Activated naive CD4-positive, alpha-beta T cell treated with anti-CD3 and anti-CD28 coated beads for 36 hours (primary cell): ENCODE measurements at regions of chr19 and their contacts with region 1.

Region 1: GRCh38 chr19:51570962-51571575 is at the start of gene ZNF175:
- DNase-seq: peak; percentile 91
- H3K4me3 Mint-ChIP-seq: peak within 1 kb of the TSS; percentile 97
- H3K27ac Mint-ChIP-seq: peak within 1 kb of the TSS; percentile 91
- H3K4me1 Mint-ChIP-seq: peaks cover 23% of the 10 kb centered on the region
- H3K27me3 Mint-ChIP-seq: peaks cover 4% of the 10 kb centered on the region
- total RNA-seq, gene ZNF175: 6.5 to 7.9 TPM

Region 2: DNA sequence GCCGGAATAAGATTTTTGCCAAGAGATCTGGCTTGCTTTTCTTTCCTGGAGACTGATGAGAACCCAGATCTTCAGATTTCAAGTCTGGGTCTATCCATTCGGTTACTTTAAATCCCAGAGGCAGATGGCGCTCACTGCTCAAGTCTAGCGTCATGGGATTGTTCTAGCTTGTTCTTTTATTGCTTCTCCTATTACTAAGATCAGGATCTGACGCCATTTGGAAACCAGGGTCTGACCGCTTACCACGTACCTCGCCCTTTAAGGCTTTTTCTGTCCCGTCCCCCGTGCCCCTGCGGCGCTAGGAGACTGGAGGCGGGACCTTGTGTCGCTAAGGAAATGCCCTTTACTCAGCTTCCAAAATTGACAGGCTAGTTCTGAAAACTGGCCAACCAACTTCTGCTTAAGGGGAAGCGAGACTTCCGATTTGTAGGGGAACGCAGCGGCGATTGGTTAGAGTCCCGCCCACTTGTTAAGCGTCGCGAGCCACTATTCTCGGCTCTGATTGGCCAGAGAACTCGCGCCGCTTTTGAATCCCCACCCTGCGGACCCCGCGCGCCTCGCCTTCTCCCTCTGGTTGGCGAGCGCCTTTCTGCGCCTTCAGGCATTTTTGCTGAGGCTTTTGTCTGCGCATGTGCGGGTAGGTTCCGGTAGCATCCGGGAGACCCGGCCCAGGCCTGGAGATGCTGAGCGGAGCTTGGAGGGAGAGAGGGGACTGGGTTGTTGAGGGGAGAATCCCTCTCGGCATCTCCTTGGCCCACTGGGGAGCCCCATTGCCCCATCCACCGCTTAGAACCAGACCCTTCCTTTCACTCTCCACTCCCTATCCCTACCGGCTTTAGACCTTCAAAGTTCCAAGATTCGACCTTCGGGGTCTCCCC is 176.9 kb before region 1 on chr19:
- CTCF ChIA-PET with region 1: no interaction called
- intact Hi-C with region 1: no loop called
- DNase-seq: peak; percentile 98
- H3K4me3 Mint-ChIP-seq: peak overlapping the region; percentile 95
- H3K27ac Mint-ChIP-seq: peak overlapping the region; percentile 96
- H3K4me1 Mint-ChIP-seq: peaks cover 35% of the 10 kb centered on the region
- H3K27me3 Mint-ChIP-seq: no peaks in the 10 kb centered on the region

Region 3: DNA sequence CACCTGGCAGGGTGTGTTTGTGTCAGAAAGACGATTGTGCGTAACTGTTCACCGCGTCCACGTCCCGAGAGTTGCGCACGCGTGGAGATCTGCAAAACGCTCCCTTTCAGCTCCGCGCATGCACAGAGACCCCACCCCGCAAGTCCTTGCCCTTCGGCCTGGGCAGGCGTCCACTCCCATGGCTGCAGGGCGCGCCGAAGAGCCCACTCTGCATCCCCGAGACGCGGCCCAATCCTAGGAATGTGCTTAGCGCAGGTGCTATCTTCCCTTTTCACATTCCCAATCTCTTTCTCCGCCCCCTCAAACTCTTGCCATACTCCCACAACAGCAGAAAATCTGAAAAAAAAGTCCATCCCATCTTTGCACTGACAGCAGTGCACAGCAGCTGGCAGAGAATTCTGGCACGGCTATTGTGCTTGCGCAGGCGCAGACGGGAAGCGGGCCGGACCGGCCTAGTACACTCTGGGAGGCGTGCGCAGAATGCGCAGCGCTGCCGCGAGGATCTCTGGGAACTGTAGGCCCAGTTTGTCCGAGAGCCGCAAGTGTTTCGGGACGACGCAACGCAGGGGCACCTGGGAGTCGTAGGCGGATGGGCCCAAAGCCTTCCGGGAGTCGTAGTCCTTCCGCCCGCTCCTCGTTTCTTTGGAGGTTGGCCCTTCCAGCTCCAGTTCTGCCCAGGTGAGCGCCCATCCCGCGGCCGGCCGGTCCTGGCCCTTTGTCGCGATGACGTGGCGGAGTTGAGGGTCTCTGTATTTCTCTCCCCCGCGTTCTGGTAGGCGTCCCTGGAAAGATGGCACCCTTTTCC is 23.1 kb after region 1 on chr19:
- CTCF ChIA-PET with region 1: no interaction called
- intact Hi-C with region 1: loop called (anchors 1 kb)
- DNase-seq: peak; percentile 97
- H3K4me3 Mint-ChIP-seq: peak overlapping the region; percentile 89
- H3K27ac Mint-ChIP-seq: peak overlapping the region; percentile 68
- H3K4me1 Mint-ChIP-seq: peaks cover 11% of the 10 kb centered on the region
- H3K27me3 Mint-ChIP-seq: no peaks in the 10 kb centered on the region

Region 4: GRCh38 chr19:51607920-51608562 is 37.0 kb after region 1 on chr19:
- CTCF ChIA-PET with region 1: no interaction called
- intact Hi-C with region 1: no loop called
- DNase-seq: peak; percentile 81
- H3K4me3 Mint-ChIP-seq: no peak overlapping the region
- H3K27ac Mint-ChIP-seq: no peak overlapping the region
- H3K4me1 Mint-ChIP-seq: peaks cover 9% of the 10 kb centered on the region
- H3K27me3 Mint-ChIP-seq: peaks cover 34% of the 10 kb centered on the region

Region 5: GRCh38 chr19:51621178-51621577 is 50.1 kb after region 1 on chr19:
- CTCF ChIA-PET with region 1: no interaction called
- intact Hi-C with region 1: no loop called
- DNase-seq: no peak
- H3K4me3 Mint-ChIP-seq: no peak overlapping the region
- H3K27ac Mint-ChIP-seq: no peak overlapping the region
- H3K4me1 Mint-ChIP-seq: no peaks in the 10 kb centered on the region
- H3K27me3 Mint-ChIP-seq: peaks cover 14% of the 10 kb centered on the region

Region 6: DNA sequence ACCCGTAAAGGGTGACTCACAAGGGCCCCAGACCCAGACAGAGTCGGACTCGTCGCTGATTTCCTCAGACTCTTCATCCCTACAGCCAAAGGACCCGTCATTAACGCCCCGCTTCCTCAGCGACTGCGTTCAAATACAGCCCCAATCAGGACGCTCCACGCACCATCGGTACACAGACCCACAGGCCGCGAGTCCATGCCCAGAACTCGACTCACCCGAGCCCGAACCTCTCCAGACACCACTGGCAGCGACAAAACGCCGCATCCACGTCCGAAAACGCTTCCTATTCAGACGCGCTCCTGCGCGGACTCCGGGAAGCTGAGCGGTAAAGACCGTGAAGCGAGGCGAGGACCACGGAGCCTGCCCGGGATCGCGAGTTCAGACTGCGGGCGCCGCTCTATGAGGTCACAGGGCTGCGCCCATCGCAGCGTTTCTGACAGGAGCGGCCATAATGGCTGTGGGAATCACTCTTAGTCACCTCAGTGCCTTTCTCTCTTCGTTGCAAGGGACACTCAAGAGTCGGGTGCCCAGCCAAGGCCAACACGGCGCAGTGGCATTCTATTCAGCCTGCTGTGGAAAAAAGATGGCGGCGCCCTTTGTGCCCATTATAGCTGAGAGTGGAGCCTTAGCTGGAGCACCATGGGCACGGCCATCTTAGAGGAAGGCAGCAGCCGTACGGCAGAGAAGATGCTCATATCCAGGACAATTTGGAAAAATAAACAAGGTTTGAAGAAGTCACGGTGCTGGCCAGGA is 457.1 kb after region 1 on chr19 and contains the start of gene ZNF614:
- CTCF ChIA-PET with region 1: no interaction called
- intact Hi-C with region 1: loop called (anchors 5 kb)
- DNase-seq: peak; percentile 90
- H3K4me3 Mint-ChIP-seq: peak within 1 kb of the TSS; percentile 82
- H3K27ac Mint-ChIP-seq: peak within 1 kb of the TSS; percentile 91
- H3K4me1 Mint-ChIP-seq: peaks cover 26% of the 10 kb centered on the region
- H3K27me3 Mint-ChIP-seq: no peaks in the 10 kb centered on the region
- total RNA-seq, gene ZNF614: 7.5 to 8.2 TPM